Endothelial cell of umbilical vein (primary cell): ENCODE measurements at regions of chr7 and their contacts with region 1.

Region 1: GRCh38 chr7:149071641-149072437 is 18.7 kb downstream of the ZNF786 start:
- DNase-seq: no peak
- H3K4me3 ChIP-seq: no peak overlapping the region
- H3K27ac ChIP-seq: no peak overlapping the region
- H3K4me1 ChIP-seq: no peaks in the 10 kb centered on the region
- H3K27me3 ChIP-seq: no peaks in the 10 kb centered on the region
- CTCF ChIP-seq: peak; percentile 23 to 40
- POLR2A ChIP-seq: no peak

Region 2: GRCh38 chr7:148747275-148747674 is 324.6 kb before region 1 on chr7:
- CTCF ChIA-PET with region 1: no interaction called
- POLR2A ChIA-PET with region 1: no interaction called
- dilution Hi-C with region 1: no loop called
- intact Hi-C with region 1: no loop called
- DNase-seq: no peak
- H3K4me3 ChIP-seq: no peak overlapping the region
- H3K27ac ChIP-seq: no peak overlapping the region
- H3K4me1 ChIP-seq: no peaks in the 10 kb centered on the region
- H3K27me3 ChIP-seq: no peaks in the 10 kb centered on the region
- CTCF ChIP-seq: no peak
- POLR2A ChIP-seq: no peak

Region 3: GRCh38 chr7:148916186-148916585 is 155.7 kb before region 1 on chr7:
- CTCF ChIA-PET with region 1: no interaction called
- POLR2A ChIA-PET with region 1: no interaction called
- dilution Hi-C with region 1: no loop called
- intact Hi-C with region 1: no loop called
- DNase-seq: no peak
- H3K4me3 ChIP-seq: no peak overlapping the region
- H3K27ac ChIP-seq: no peak overlapping the region
- H3K4me1 ChIP-seq: no peaks in the 10 kb centered on the region
- H3K27me3 ChIP-seq: no peaks in the 10 kb centered on the region
- CTCF ChIP-seq: no peak
- POLR2A ChIP-seq: no peak

Region 4: DNA sequence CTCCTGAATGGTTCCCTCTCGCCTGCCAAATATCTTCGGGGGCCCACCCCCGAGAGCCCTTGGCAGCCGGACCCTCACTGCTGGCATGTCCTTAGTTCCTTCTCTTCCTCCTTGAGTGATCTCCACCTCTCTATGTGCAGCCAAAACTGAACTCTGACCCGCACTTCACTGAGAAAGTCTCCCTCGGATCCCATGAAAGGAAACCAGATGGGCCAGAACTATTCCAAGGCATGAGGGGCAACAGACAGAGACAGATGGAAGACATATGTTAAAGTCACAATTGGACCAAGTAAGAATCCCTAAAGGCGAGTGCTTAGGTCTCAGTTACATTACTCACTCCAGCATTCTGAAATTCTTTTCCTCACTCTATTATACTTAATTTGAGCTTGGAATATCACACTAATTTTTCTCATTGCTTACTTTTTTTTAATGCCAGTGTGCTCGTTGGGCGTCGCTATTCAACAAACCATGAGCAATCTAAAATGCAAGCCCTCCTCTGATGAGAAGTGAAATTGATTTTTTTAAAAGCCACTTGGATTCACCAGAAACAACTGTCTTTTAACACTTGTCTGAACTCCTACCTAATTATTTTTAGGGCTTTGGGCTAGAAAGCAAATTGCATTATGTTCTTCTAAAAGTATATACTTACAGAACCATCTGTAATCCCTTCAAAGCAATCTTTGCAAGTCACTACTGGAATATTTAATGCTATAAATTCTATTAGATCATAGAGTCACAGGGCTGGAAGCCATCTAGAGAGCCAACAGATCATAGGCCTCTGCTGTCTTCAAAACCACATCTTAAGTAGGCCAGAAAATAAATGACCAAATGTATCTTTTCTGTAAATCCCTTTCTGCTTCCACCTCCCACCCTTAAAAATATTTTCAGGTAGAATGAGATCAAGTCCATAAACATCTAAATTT is 144.5 kb before region 1 on chr7:
- CTCF ChIA-PET with region 1: no interaction called
- POLR2A ChIA-PET with region 1: no interaction called
- dilution Hi-C with region 1: no loop called
- intact Hi-C with region 1: no loop called
- DNase-seq: no peak
- H3K4me3 ChIP-seq: no peak overlapping the region
- H3K27ac ChIP-seq: no peak overlapping the region
- H3K4me1 ChIP-seq: no peaks in the 10 kb centered on the region
- H3K27me3 ChIP-seq: no peaks in the 10 kb centered on the region
- CTCF ChIP-seq: no peak
- POLR2A ChIP-seq: no peak

Region 5: DNA sequence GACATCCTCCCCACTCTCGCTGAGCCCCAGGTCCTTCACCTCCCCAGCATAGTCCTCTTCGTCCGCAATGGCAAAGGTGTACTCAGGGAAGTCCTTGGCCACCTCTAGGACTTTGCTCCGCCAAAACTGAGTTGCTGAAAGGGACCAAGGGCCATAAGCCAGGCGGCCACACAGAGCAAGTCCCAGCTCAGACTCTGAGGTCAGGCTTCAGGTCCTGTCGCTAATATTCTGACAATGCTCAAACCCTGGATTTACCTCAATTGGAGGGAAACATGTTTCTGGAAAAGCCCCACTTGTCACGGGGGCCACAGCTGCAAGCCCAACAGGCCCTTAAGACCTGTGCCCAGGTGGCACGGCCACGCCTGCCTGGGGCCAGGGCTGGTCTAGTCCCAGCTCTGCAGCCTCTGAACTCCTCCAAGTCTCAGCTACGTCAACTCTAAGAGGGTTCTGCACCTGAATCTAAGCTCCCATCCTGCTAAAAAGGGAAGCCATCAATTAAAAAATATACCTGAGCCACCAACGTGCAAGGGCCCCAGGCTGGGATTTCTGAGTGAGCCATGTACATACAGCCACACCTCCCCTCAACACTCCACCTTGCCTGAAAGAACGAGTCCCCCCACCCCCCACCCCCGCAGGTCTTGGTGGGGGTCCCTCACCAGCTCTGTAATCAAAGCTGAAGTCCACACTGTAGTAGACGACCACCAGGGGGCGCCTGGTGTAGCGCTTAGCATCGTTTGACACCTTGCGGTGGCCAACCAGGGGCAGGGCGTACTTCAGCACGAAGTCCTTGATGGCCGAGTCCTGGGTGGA is 66.4 kb before region 1 on chr7:
- CTCF ChIA-PET with region 1: interaction called, 146 read pairs
- POLR2A ChIA-PET with region 1: no interaction called
- dilution Hi-C with region 1: no loop called
- intact Hi-C with region 1: no loop called
- DNase-seq: peak; percentile 65
- H3K4me3 ChIP-seq: no peak overlapping the region
- H3K27ac ChIP-seq: no peak overlapping the region
- H3K4me1 ChIP-seq: no peaks in the 10 kb centered on the region
- H3K27me3 ChIP-seq: no peaks in the 10 kb centered on the region
- CTCF ChIP-seq: peak; percentile 66 to 91
- POLR2A ChIP-seq: no peak

Region 6: GRCh38 chr7:149010451-149011010 is 61.3 kb before region 1 on chr7:
- CTCF ChIA-PET with region 1: interaction called, 146 read pairs
- POLR2A ChIA-PET with region 1: no interaction called
- dilution Hi-C with region 1: no loop called
- intact Hi-C with region 1: no loop called
- DNase-seq: no peak
- H3K4me3 ChIP-seq: no peak overlapping the region
- H3K27ac ChIP-seq: no peak overlapping the region
- H3K4me1 ChIP-seq: no peaks in the 10 kb centered on the region
- H3K27me3 ChIP-seq: no peaks in the 10 kb centered on the region
- CTCF ChIP-seq: no peak
- POLR2A ChIP-seq: no peak

Region 7: GRCh38 chr7:149398195-149398820 is 326.5 kb after region 1 on chr7:
- CTCF ChIA-PET with region 1: no interaction called
- POLR2A ChIA-PET with region 1: no interaction called
- dilution Hi-C with region 1: no loop called
- intact Hi-C with region 1: no loop called
- DNase-seq: no peak
- H3K4me3 ChIP-seq: no peak overlapping the region
- H3K27ac ChIP-seq: no peak overlapping the region
- H3K4me1 ChIP-seq: no peaks in the 10 kb centered on the region
- H3K27me3 ChIP-seq: peaks cover 0 to 5% of the 10 kb centered on the region in 2 experiments
- CTCF ChIP-seq: no peak
- POLR2A ChIP-seq: no peak